Activated naive CD4-positive, alpha-beta T cell treated with anti-CD3 and anti-CD28 coated beads for 36 hours (primary cell): ENCODE measurements at regions of chr4 and their contacts with region 1.

Region 1: DNA sequence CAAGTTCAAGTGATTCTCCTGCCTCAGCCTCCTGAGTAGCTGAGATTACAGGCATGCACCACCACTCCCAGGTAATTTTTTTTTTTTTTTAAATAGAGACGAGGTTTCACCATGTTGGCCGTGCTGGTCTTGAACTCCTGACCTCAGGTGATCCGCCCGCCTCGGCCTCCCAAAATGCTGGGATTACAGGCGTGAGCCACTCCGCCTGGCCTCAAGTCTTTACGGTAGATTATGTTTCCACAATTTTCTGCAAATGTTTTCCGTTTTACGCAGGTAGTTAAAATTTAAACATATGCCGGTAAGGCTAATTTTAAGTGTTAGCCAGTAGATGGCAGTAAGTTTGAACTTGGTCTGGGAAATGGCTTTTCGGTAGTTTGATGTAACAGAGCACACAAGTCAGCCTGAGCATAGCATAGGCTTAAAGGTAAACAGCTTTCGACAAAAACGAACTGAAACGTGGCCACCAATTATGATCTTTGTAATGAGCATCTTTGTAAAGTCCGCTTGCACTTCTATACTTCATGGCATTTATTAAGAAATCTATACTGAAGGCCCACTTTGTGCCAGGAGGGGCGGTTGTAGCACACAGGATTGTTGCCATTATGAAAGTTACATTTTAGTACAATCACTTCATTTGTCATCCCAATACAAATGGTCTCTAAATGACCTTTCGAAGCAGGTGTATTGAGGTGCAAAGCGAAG is 31.1 kb downstream of the CCKAR start:
- DNase-seq: peak; percentile 8
- H3K4me3 Mint-ChIP-seq: peak overlapping the region; percentile 65
- H3K27ac Mint-ChIP-seq: no peak overlapping the region
- H3K4me1 Mint-ChIP-seq: peaks cover 19% of the 10 kb centered on the region
- H3K27me3 Mint-ChIP-seq: no peaks in the 10 kb centered on the region

Region 2: DNA sequence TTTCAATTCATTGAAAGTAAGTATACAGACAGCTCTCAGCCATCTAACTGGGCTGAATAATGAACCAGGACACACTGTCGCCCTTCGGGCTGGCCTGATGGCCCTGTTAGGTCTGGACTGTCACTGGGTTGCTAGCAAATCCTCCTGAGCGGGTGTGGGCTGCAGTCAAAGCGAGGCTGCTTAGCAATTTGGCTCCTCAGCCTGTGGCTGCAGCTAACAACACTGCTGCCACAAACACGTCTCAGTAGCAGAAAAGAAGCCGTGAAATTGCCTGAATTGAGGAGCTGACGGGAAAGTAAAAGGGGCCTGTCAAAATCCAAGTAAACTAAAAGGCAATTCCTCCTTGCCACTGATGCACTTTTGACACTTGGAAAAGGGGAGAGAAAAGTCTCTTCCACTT is 472.4 kb before region 1 on chr4:
- CTCF ChIA-PET with region 1: interaction called, 17 read pairs
- intact Hi-C with region 1: no loop called
- DNase-seq: no peak
- H3K4me3 Mint-ChIP-seq: no peak overlapping the region
- H3K27ac Mint-ChIP-seq: no peak overlapping the region
- H3K4me1 Mint-ChIP-seq: peaks cover 6% of the 10 kb centered on the region
- H3K27me3 Mint-ChIP-seq: no peaks in the 10 kb centered on the region

Region 3: GRCh38 chr4:26583865-26584652 is 124.9 kb after region 1 on chr4 and contains the start of gene TBC1D19:
- CTCF ChIA-PET with region 1: interaction called, 3 read pairs
- intact Hi-C with region 1: loop called (anchors 1 kb)
- DNase-seq: peak; percentile 92
- H3K4me3 Mint-ChIP-seq: peak within 1 kb of the TSS; percentile 93
- H3K27ac Mint-ChIP-seq: peak within 1 kb of the TSS; percentile 92
- H3K4me1 Mint-ChIP-seq: peaks cover 32% of the 10 kb centered on the region
- H3K27me3 Mint-ChIP-seq: no peaks in the 10 kb centered on the region
- total RNA-seq, gene TBC1D19: 3.8 to 4.1 TPM

Region 4: GRCh38 chr4:26719954-26720552 is 260.8 kb after region 1 on chr4:
- CTCF ChIA-PET with region 1: interaction called, 3 read pairs
- intact Hi-C with region 1: loop called (anchors 1 kb)
- DNase-seq: no peak
- H3K4me3 Mint-ChIP-seq: no peak overlapping the region
- H3K27ac Mint-ChIP-seq: no peak overlapping the region
- H3K4me1 Mint-ChIP-seq: peaks cover 10% of the 10 kb centered on the region
- H3K27me3 Mint-ChIP-seq: no peaks in the 10 kb centered on the region

Region 5: GRCh38 chr4:27010334-27010940 is 551.2 kb after region 1 on chr4:
- CTCF ChIA-PET with region 1: interaction called, 5 read pairs
- intact Hi-C with region 1: loop called (anchors 1 kb)
- DNase-seq: peak; percentile 77
- H3K4me3 Mint-ChIP-seq: no peak overlapping the region
- H3K27ac Mint-ChIP-seq: peak overlapping the region; percentile 53
- H3K4me1 Mint-ChIP-seq: peaks cover 25% of the 10 kb centered on the region
- H3K27me3 Mint-ChIP-seq: no peaks in the 10 kb centered on the region

Region 6: GRCh38 chr4:27318743-27319142 is 859.5 kb after region 1 on chr4:
- CTCF ChIA-PET with region 1: no interaction called
- intact Hi-C with region 1: loop called (anchors 5 kb)
- DNase-seq: peak; percentile 50
- H3K4me3 Mint-ChIP-seq: no peak overlapping the region
- H3K27ac Mint-ChIP-seq: no peak overlapping the region
- H3K4me1 Mint-ChIP-seq: no peaks in the 10 kb centered on the region
- H3K27me3 Mint-ChIP-seq: peaks cover 4% of the 10 kb centered on the region